Activated CD4-positive, alpha-beta memory T cell treated with anti-CD3 and anti-CD28 coated beads for 36 hours (primary cell): ENCODE measurements at regions of chr2 and their contacts with region 1.

Region 1: GRCh38 chr2:210195101-210195852 is 24.1 kb upstream of the KANSL1L start:
- DNase-seq: no peak
- H3K4me3 Mint-ChIP-seq: no peak overlapping the region
- H3K27ac Mint-ChIP-seq: no peak overlapping the region
- H3K4me1 Mint-ChIP-seq: no peaks in the 10 kb centered on the region
- H3K27me3 Mint-ChIP-seq: no peaks in the 10 kb centered on the region

Region 2: GRCh38 chr2:208392300-208393080 is 1802.8 kb before region 1 on chr2:
- CTCF ChIA-PET with region 1: no interaction called
- POLR2A ChIA-PET with region 1: no interaction called
- intact Hi-C with region 1: loop called (anchors 10 kb)
- DNase-seq: no peak
- H3K4me3 Mint-ChIP-seq: no peak overlapping the region
- H3K27ac Mint-ChIP-seq: no peak overlapping the region
- H3K4me1 Mint-ChIP-seq: no peaks in the 10 kb centered on the region
- H3K27me3 Mint-ChIP-seq: peaks cover 2% of the 10 kb centered on the region

Region 3: GRCh38 chr2:209423562-209424198 is 771.6 kb before region 1 on chr2 and contains the start of gene MAP2:
- CTCF ChIA-PET with region 1: no interaction called
- POLR2A ChIA-PET with region 1: no interaction called
- intact Hi-C with region 1: loop called (anchors 10 kb)
- DNase-seq: peak; percentile 77
- H3K4me3 Mint-ChIP-seq: peak within 1 kb of the TSS; percentile 57
- H3K27ac Mint-ChIP-seq: no peak within 1 kb of the TSS
- H3K4me1 Mint-ChIP-seq: peaks cover 10% of the 10 kb centered on the region
- H3K27me3 Mint-ChIP-seq: peaks cover 25% of the 10 kb centered on the region
- total RNA-seq, gene MAP2: 0.07 to 0.27 TPM

Region 4: GRCh38 chr2:209790066-209790728 is 405.1 kb before region 1 on chr2:
- CTCF ChIA-PET with region 1: no interaction called
- POLR2A ChIA-PET with region 1: no interaction called
- intact Hi-C with region 1: loop called (anchors 10 kb)
- DNase-seq: no peak
- H3K4me3 Mint-ChIP-seq: peak overlapping the region; percentile 25
- H3K27ac Mint-ChIP-seq: no peak overlapping the region
- H3K4me1 Mint-ChIP-seq: peaks cover 18% of the 10 kb centered on the region
- H3K27me3 Mint-ChIP-seq: no peaks in the 10 kb centered on the region

Region 5: GRCh38 chr2:209977386-209978239 is 217.7 kb before region 1 on chr2:
- CTCF ChIA-PET with region 1: interaction called, 79 read pairs
- POLR2A ChIA-PET with region 1: no interaction called
- intact Hi-C with region 1: loop called (anchors 1 kb)
- DNase-seq: no peak
- H3K4me3 Mint-ChIP-seq: no peak overlapping the region
- H3K27ac Mint-ChIP-seq: no peak overlapping the region
- H3K4me1 Mint-ChIP-seq: no peaks in the 10 kb centered on the region
- H3K27me3 Mint-ChIP-seq: peaks cover 8% of the 10 kb centered on the region

Region 6: DNA sequence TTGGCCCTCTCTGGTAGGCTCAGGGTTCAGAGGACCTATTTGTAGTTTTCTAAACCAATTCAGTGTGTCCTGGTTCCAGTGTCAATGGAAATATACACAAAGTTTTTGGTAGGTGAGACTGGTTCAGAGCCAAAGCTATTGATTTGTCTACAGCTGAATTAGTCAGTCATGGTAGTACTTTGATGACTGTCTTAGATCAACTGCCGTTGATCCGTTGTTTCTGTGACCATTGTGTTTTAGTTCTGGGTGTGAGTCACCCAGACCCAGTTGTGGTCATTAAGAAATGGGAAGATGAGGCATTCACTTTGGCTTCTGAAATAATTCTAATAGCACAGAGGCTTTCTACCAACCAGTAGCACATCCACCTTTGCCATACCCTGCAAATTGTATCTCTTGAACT is 208.9 kb before region 1 on chr2:
- CTCF ChIA-PET with region 1: interaction called, 13 read pairs
- POLR2A ChIA-PET with region 1: no interaction called
- intact Hi-C with region 1: no loop called
- DNase-seq: no peak
- H3K4me3 Mint-ChIP-seq: no peak overlapping the region
- H3K27ac Mint-ChIP-seq: no peak overlapping the region
- H3K4me1 Mint-ChIP-seq: no peaks in the 10 kb centered on the region
- H3K27me3 Mint-ChIP-seq: peaks cover 14% of the 10 kb centered on the region

Region 7: GRCh38 chr2:210072922-210073509 is 122.3 kb before region 1 on chr2:
- CTCF ChIA-PET with region 1: interaction called, 11 read pairs
- POLR2A ChIA-PET with region 1: no interaction called
- intact Hi-C with region 1: loop called (anchors 1 kb)
- DNase-seq: no peak
- H3K4me3 Mint-ChIP-seq: no peak overlapping the region
- H3K27ac Mint-ChIP-seq: no peak overlapping the region
- H3K4me1 Mint-ChIP-seq: no peaks in the 10 kb centered on the region
- H3K27me3 Mint-ChIP-seq: no peaks in the 10 kb centered on the region